ENCODE measurements at regions of chr9 and their contacts with region 1.

Region 1: GRCh38 chr9:34072868-34073590 is 24.3 kb upstream of the UBAP2 start:
- DNase-seq: peak; percentile 52 to 87 (median 70)
- ATAC-seq: peak; percentile 94
- H3K4me3 ChIP-seq: no peak overlapping the region
- H3K27ac ChIP-seq: peak overlapping the region; percentile 39 to 80 (median 70)
- H3K4me1 ChIP-seq: peaks cover 34% of the 10 kb centered on the region
- H3K27me3 ChIP-seq: no peaks in the 10 kb centered on the region
- CTCF ChIP-seq: peak in 1 of 7 experiments; percentile 14
- POLR2A ChIP-seq: no peak

Region 2: DNA sequence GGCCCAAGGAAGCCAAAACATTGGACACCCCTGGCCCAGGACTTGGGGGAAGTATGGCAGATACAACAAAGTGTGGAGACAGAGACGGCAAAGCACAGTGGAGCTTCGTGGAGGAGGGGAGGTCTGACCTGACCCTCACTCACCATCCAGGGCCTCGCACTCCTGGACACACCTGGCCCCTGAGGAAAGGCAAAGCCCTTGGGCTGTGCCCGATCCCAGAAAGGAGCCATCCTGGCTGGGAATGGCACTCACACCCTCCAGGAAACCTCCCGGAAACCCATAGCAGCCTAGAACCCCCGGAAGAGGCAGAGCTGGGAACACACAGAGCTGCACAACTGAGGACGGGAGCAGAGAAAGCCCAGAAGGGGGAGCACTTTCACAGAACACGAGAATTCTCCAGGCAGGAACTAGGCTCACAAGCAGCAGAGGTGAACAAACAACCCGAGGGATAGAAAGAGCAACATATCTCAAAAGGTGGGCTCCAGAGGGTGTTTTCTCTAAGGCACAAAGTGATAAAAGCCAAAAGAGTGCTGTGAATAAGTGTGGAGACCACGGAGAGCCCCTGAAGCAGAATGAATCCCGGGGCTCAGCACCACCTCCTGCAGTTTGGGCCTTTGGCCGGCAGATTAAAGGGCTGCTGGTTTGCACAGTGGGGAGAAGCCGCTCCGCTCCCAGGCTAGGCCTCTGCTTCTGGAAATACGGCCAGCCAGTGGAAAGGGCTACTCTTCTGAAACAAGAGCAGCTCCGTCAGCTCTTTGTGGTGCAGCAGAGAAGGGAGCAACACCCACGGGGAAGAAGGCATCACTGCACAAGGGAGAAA is 147.8 kb before region 1 on chr9:
- intact Hi-C with region 1: loop called (anchors 10 kb)
- DNase-seq: peak; percentile 63 to 74 (median 69)
- ATAC-seq: peak; percentile 63
- H3K4me3 ChIP-seq: no peak overlapping the region
- H3K27ac ChIP-seq: peak overlapping the region in 2 of 4 donors; percentile 22 to 58
- H3K4me1 ChIP-seq: peaks cover 30% of the 10 kb centered on the region
- H3K27me3 ChIP-seq: no peaks in the 10 kb centered on the region
- CTCF ChIP-seq: peak; percentile 33 to 66 (median 52)
- POLR2A ChIP-seq: no peak

Measured in body of pancreas (tissue), 4 donors.